ENCODE measurements at regions of chr3 and their contacts with region 1.

Region 1: DNA sequence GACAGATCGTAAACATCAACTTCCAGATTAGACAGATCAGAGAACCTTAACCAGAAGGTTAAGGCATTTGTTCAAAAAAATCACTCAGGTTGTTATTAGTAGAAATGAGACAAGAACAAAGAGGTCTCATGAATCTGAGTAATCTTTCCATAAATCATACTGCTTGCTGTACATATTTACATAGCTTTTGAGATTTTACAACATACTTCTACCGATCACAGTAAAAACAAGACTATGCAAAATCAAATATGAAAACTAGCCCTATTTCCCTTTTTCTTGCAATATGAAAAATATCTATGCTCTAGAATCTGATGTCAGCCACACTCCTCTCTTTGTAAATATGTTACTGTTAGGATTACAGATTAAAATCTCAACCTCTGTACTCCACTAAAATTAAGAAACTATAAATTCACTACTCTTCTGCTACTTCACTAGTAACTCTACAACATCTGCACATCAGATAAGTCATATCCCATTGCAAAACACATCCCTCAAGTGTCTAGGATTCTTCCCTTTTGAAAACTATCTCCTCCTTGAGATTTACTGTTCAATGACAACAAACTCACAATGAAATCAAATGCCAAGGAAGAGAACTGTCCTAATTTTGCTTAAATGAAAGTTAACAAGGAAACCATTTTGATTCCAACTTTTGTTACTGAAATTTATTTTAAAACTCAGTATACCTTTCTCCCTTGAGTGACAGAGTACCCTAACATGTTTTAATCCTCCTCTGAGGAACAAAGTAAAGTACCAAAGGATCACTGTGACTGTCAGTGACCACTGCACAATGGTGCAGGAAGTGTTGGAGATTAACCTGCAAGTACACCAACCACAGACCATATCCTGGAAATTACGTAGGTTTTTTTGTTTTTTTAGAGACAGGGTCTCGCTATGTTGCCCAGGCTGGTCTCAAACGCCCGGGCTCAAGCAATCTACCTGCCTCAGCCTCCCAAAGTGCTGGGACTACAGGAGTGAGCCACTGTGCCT is 12.8 kb downstream of the DCUN1D1 start:
- DNase-seq: peak; percentile 24
- H3K4me3 Mint-ChIP-seq: peak overlapping the region; percentile 6
- H3K27ac Mint-ChIP-seq: peak overlapping the region; percentile 80
- H3K4me1 Mint-ChIP-seq: peaks cover 59% of the 10 kb centered on the region
- H3K27me3 Mint-ChIP-seq: no peaks in the 10 kb centered on the region

Region 2: GRCh38 chr3:182792901-182793662 is 174.4 kb before region 1 on chr3 and contains the start of gene ATP11B:
- CTCF ChIA-PET with region 1: no interaction called
- POLR2A ChIA-PET with region 1: interaction called, 5 read pairs
- intact Hi-C with region 1: loop called (anchors 5 kb)
- DNase-seq: peak; percentile 82
- H3K4me3 Mint-ChIP-seq: peak within 1 kb of the TSS; percentile 93
- H3K27ac Mint-ChIP-seq: peak within 1 kb of the TSS; percentile 94
- H3K4me1 Mint-ChIP-seq: peaks cover 24% of the 10 kb centered on the region
- H3K27me3 Mint-ChIP-seq: peaks cover 2% of the 10 kb centered on the region
- total RNA-seq, gene ATP11B: 93.9 to 96.0 TPM

Region 3: GRCh38 chr3:182909318-182910040 is 58.0 kb before region 1 on chr3:
- CTCF ChIA-PET with region 1: no interaction called
- POLR2A ChIA-PET with region 1: no interaction called
- intact Hi-C with region 1: loop called (anchors 5 kb)
- DNase-seq: peak; percentile 16
- H3K4me3 Mint-ChIP-seq: no peak overlapping the region
- H3K27ac Mint-ChIP-seq: no peak overlapping the region
- H3K4me1 Mint-ChIP-seq: peaks cover 44% of the 10 kb centered on the region
- H3K27me3 Mint-ChIP-seq: no peaks in the 10 kb centered on the region

Region 4: DNA sequence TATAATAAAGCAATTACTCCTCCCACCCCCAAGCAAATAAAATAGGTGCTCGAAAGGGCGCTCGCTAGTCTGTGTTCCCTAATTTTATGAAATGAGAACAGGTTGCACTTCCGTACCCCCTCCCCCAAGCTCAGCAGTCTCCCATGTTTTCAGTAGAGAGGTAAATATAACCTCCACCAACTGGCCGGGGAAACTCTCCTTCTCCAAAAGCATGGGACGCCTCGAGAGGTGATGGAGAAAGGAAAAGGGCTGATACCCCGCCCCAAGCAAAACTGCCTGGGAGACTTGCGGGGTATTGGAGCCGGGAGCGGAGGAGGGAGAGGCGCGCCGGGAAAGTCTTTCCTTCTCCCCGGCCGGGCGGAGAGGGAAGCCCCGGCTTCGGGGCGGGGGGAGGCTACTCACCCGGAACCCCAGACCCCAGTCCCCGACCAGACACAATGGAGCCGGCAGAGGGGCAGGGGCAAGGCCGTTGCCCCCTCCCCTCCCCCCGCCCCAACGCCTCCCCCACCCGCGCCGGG is 12.2 kb after region 1 on chr3:
- CTCF ChIA-PET with region 1: interaction called, 4 read pairs
- POLR2A ChIA-PET with region 1: interaction called, 4 read pairs
- intact Hi-C with region 1: loop called (anchors 1 kb)
- DNase-seq: peak; percentile 42
- H3K4me3 Mint-ChIP-seq: peak overlapping the region; percentile 83
- H3K27ac Mint-ChIP-seq: peak overlapping the region; percentile 73
- H3K4me1 Mint-ChIP-seq: peaks cover 20% of the 10 kb centered on the region
- H3K27me3 Mint-ChIP-seq: no peaks in the 10 kb centered on the region

Region 5: GRCh38 chr3:183006396-183007002 is 39.0 kb after region 1 on chr3:
- CTCF ChIA-PET with region 1: no interaction called
- POLR2A ChIA-PET with region 1: no interaction called
- intact Hi-C with region 1: no loop called
- DNase-seq: no peak
- H3K4me3 Mint-ChIP-seq: no peak overlapping the region
- H3K27ac Mint-ChIP-seq: no peak overlapping the region
- H3K4me1 Mint-ChIP-seq: no peaks in the 10 kb centered on the region
- H3K27me3 Mint-ChIP-seq: no peaks in the 10 kb centered on the region

Region 6: GRCh38 chr3:183099026-183099837 is 131.7 kb after region 1 on chr3 and contains the start of gene MCCC1:
- CTCF ChIA-PET with region 1: no interaction called
- POLR2A ChIA-PET with region 1: no interaction called
- intact Hi-C with region 1: loop called (anchors 5 kb)
- DNase-seq: peak; percentile 99
- H3K4me3 Mint-ChIP-seq: peak within 1 kb of the TSS; percentile 95
- H3K27ac Mint-ChIP-seq: peak within 1 kb of the TSS; percentile 96
- H3K4me1 Mint-ChIP-seq: peaks cover 34% of the 10 kb centered on the region
- H3K27me3 Mint-ChIP-seq: no peaks in the 10 kb centered on the region
- total RNA-seq, gene MCCC1: 28.4 to 29.7 TPM

Region 7: DNA sequence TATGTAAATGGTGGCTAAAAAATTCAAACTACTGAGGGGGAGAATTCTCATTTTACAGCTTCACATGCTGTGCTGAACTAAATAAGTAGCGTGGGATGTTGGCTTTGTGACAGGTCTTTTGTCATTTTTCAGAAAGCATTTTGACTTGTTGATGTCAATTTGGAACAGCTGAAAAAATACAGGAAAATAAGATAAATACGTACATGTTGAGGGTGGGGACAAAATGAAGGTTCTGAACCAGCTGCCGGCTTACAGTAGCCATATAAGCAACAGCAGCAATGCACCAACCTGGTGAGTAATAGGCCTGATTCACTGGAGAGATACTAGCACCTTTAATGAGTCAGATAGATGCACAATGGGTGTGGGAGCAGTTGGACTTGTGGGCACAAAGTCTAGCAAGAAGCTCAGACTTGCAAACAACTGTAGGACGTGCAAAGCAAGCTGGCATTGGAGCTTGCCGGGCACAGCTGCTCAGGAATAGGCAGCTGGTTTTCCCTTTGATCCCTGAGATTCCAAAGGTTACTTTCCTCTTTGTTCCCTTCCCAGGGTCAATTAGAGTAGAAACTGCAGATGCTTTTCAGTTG is 298.4 kb after region 1 on chr3:
- CTCF ChIA-PET with region 1: no interaction called
- POLR2A ChIA-PET with region 1: no interaction called
- intact Hi-C with region 1: loop called (anchors 2 kb)
- DNase-seq: peak; percentile 71
- H3K4me3 Mint-ChIP-seq: peak overlapping the region; percentile 25
- H3K27ac Mint-ChIP-seq: no peak overlapping the region
- H3K4me1 Mint-ChIP-seq: peaks cover 1% of the 10 kb centered on the region
- H3K27me3 Mint-ChIP-seq: no peaks in the 10 kb centered on the region

Region 8: GRCh38 chr3:183375787-183376186 is 408.3 kb after region 1 on chr3:
- CTCF ChIA-PET with region 1: no interaction called
- POLR2A ChIA-PET with region 1: no interaction called
- intact Hi-C with region 1: no loop called
- DNase-seq: no peak
- H3K4me3 Mint-ChIP-seq: no peak overlapping the region
- H3K27ac Mint-ChIP-seq: no peak overlapping the region
- H3K4me1 Mint-ChIP-seq: peaks cover 28% of the 10 kb centered on the region
- H3K27me3 Mint-ChIP-seq: no peaks in the 10 kb centered on the region

Region 9: DNA sequence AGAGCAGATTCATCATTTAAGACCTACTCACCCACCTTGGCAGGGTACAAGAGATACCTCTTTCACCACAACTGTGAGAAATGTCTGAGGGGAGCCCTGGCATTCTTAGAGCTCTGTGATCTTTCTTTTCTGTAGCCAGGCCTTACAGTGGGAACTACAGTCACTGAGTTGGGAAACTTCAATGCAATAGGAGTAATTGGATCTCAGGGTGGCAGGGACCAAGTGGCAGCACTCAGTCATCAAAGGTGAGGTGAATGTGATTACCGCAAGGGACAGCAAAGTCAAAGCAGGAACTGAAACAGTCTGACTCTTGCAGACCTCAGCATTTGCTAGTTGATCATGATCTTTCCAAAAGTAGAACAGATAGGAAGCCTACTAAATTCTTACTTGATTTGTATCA is 468.1 kb after region 1 on chr3:
- CTCF ChIA-PET with region 1: no interaction called
- POLR2A ChIA-PET with region 1: no interaction called
- intact Hi-C with region 1: loop called (anchors 5 kb)
- DNase-seq: peak; percentile 74
- H3K4me3 Mint-ChIP-seq: no peak overlapping the region
- H3K27ac Mint-ChIP-seq: peak overlapping the region; percentile 69
- H3K4me1 Mint-ChIP-seq: peaks cover 58% of the 10 kb centered on the region
- H3K27me3 Mint-ChIP-seq: no peaks in the 10 kb centered on the region